Activated T-helper 2 cell treated with anti-CD3 and anti-CD28 coated beads, Interferon-gamma antibody, Interleukin-2, Interleukin-4, amounts not matched to agents 10 μg/mL and 5 μg/mL and 100 μg/mL, durations not matched to agents 14 hours and 24 hours and 36 hours (primary cell): ENCODE measurements at regions of chr10 and their contacts with region 1.

Region 1: DNA sequence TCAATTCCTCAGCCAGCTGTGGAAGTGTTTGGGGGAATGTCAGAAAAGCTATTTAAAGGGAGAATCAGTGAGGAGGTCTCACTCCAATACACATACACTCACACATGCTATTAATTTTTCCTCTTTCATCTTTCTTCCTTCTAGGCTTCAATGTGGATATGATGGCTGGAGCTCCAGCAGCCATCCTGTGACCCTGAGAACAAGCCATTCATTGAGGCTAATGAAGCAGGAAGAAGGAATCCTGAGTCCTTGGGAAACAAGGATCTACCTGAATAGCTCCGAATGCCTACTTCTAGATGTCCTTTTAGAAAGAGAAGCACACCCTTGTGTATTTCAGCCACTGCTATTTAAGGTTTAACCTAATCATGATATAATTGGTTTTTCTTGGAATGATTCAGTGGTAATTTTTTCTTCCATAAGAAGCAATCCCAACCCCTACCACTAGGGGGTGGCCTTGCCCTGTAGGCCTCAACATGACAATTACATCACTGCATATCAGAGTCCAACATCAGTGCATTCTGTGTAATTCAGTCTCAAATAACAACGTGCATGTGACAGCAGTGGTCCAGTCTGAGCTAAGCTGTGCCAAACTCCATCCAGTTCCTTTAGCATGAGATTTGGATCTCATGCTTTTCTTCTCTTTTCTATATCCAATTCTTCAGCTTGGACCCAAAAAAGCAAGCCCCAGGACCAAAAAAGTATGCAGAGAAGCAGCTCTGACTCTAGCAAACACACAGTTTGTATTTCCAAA is 85.3 kb upstream of the ANKRD1 start:
- DNase-seq: peak; percentile 45
- H3K4me3 Mint-ChIP-seq: no peak overlapping the region
- H3K27ac Mint-ChIP-seq: no peak overlapping the region
- H3K4me1 Mint-ChIP-seq: peaks cover 25% of the 10 kb centered on the region
- H3K27me3 Mint-ChIP-seq: peaks cover 27% of the 10 kb centered on the region

Region 2: GRCh38 chr10:90871766-90872647 is 134.2 kb before region 1 on chr10 and contains the start of gene RPP30:
- intact Hi-C with region 1: loop called (anchors 5 kb)
- DNase-seq: peak; percentile 76
- H3K4me3 Mint-ChIP-seq: peak within 1 kb of the TSS; percentile 100
- H3K27ac Mint-ChIP-seq: peak within 1 kb of the TSS; percentile 97
- H3K4me1 Mint-ChIP-seq: peaks cover 25% of the 10 kb centered on the region
- H3K27me3 Mint-ChIP-seq: peaks cover 21% of the 10 kb centered on the region
- total RNA-seq, gene RPP30: 69.1 and 73.4 TPM in 2 replicates

Region 3: DNA sequence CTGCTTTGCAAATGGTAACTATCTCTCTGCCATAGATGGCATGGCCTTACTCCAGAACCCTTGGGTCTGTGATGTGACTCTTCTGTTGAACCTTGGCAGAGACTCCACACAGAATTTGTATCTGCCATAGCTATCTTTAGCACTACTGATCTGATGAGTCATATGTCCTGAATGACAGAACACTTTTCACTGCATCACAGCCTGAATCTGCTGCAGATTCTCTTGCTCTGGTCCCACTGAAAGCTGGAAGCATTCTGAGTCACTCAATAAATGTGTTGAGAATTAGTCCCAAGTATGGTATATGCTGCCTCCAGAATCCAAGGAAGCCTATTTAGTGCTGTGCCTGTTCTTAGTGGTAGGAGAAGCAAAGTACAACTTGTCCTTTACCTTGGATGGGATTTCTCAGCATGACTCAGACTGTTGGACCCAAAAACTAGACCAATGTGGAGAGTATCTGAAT is 45.8 kb before region 1 on chr10:
- intact Hi-C with region 1: loop called (anchors 1 kb)
- DNase-seq: no peak
- H3K4me3 Mint-ChIP-seq: no peak overlapping the region
- H3K27ac Mint-ChIP-seq: no peak overlapping the region
- H3K4me1 Mint-ChIP-seq: peaks cover 10% of the 10 kb centered on the region
- H3K27me3 Mint-ChIP-seq: peaks cover 5% of the 10 kb centered on the region

Region 4: DNA sequence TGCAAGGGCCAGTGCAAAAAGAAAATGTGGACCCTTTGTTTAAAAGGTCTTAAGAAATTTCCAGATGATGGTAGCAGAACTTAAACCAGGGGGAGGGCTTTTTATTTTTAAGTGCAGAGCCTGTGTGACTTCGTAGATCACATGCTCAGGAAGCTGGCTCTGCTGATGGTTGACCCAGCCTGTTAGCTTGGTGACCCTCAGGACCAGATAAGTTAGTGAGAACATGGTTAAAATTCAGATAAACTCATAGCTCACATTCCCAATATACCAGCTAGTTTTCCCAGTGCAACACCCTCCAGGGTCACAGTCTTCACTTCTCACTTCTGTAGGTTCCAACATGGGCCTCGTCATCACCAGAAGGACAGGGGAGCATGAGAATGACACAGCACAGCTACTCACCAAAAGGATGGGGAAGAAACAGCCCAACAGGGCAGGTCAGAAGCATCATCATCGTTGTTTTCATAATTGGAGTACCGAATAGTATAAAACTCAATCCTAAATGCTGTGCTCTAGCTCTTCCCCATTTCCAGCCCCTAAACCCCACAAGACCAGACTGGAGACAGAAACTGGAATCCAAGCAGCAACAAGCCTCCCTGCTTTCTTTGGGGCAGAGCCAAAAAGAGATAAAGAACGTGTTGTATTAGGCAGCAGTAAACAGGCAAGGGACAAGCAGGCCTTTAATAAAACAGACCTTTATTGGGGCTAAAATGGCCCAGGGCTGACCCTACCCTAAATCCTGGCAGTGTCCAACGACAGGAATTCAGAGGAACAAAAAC is 16.9 kb after region 1 on chr10:
- intact Hi-C with region 1: no loop called
- DNase-seq: no peak
- H3K4me3 Mint-ChIP-seq: no peak overlapping the region
- H3K27ac Mint-ChIP-seq: no peak overlapping the region
- H3K4me1 Mint-ChIP-seq: no peaks in the 10 kb centered on the region
- H3K27me3 Mint-ChIP-seq: peaks cover 49% of the 10 kb centered on the region

Region 5: GRCh38 chr10:91088300-91089140 is 82.3 kb after region 1 on chr10:
- intact Hi-C with region 1: loop called (anchors 1 kb)
- DNase-seq: no peak
- H3K4me3 Mint-ChIP-seq: no peak overlapping the region
- H3K27ac Mint-ChIP-seq: no peak overlapping the region
- H3K4me1 Mint-ChIP-seq: no peaks in the 10 kb centered on the region
- H3K27me3 Mint-ChIP-seq: peaks cover 9% of the 10 kb centered on the region

Region 6: DNA sequence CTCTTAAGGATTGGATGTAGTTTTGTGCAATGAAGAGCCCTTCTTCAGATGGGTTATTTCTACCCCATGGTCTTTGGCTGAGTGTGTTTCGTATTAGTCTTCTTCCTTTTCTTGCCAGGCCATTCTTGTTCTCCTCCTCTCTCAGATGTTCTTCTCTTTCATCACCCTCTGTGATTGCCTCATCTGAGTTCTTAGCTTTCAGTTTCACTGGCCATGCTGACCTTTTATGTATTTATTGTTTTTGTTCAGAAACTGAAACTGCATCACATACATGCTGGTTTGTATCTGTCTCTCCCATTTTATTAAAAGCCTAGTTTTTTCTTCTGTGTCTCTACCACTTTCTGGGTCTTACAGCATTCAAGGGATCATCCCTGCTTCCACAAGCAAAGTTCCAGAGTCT is 192.6 kb after region 1 on chr10:
- intact Hi-C with region 1: loop called (anchors 2 kb)
- DNase-seq: no peak
- H3K4me3 Mint-ChIP-seq: peak overlapping the region; percentile 1
- H3K27ac Mint-ChIP-seq: peak overlapping the region; percentile 76
- H3K4me1 Mint-ChIP-seq: peaks cover 73% of the 10 kb centered on the region
- H3K27me3 Mint-ChIP-seq: no peaks in the 10 kb centered on the region

Region 7: GRCh38 chr10:91409869-91410637 is 403.9 kb after region 1 on chr10 and contains the start of gene HECTD2:
- intact Hi-C with region 1: loop called (anchors 1 kb)
- DNase-seq: peak; percentile 76
- H3K4me3 Mint-ChIP-seq: peak within 1 kb of the TSS; percentile 87
- H3K27ac Mint-ChIP-seq: peak within 1 kb of the TSS; percentile 90
- H3K4me1 Mint-ChIP-seq: peaks cover 16% of the 10 kb centered on the region
- H3K27me3 Mint-ChIP-seq: peaks cover 17% of the 10 kb centered on the region
- total RNA-seq, gene HECTD2: 6.6 and 8.2 TPM in 2 replicates